ENCODE measurements at regions of chr6 and their contacts with region 1.

Region 1: GRCh38 chr6:125764121-125764671 is 14.8 kb downstream of the HEY2 start:
- DNase-seq: no peak
- H3K4me3 ChIP-seq: no peak overlapping the region
- H3K27ac ChIP-seq: no peak overlapping the region
- H3K4me1 ChIP-seq: no peaks in the 10 kb centered on the region
- H3K27me3 ChIP-seq: peaks cover 59% of the 10 kb centered on the region

Region 2: GRCh38 chr6:125314019-125314581 is 450.1 kb before region 1 on chr6:
- in situ Hi-C with region 1: loop called (anchors 5 kb)
- DNase-seq: peak; percentile 82
- H3K4me3 ChIP-seq: no peak overlapping the region
- H3K27ac ChIP-seq: no peak overlapping the region
- H3K4me1 ChIP-seq: no peaks in the 10 kb centered on the region
- H3K27me3 ChIP-seq: peaks cover 4% of the 10 kb centered on the region; the same call in 1 of the 2 replicates

Measured in GM23248 (cell line).